ENCODE measurements at regions of chr3 and their contacts with region 1.

Region 1: DNA sequence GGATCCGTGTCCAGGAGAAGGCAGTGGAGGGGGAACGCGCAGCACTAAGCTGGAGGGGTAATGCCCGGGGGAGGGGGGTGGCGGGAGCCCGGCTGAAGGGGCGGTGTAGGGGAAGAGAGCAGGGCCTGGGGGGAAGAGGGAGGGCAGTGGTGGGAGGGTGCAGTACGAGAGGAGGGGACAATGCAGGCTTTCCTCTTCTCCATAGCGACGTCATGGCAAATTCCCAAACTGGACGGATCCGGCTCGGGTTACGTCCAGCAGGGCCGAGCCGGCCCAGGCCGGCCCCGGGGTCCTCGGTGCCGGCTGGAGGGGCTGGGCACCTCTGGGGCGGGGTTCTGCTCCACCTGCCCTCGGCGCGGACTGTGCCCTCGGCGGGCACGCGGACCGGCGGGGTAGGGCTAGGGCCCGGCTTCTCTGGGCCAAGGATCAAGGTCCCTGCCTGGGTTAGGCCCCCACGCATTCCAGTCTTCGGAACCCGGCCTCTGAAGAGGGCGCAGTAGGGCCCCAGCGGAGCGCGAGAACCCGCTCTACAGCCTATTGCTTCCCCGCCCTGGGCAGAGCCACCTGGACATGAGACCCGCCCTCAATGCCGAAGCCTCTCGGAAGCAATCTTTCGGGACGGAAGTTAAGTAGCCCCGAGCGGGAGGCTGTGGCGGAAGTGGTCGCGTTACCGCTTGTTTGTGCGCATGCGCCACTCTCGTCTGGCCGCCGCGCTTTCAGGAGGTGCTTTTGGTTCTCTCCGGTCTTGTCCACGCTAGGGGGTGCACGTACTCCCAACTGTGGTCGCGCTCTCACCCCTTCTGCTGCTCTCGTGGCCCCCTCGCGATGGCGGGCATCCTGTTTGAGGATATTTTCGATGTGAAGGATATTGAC is 1.4 kb downstream of the POLR2H start:
- H3K4me3 Mint-ChIP-seq: peak overlapping the region; percentile 86
- H3K27ac Mint-ChIP-seq: peak overlapping the region; percentile 90
- H3K4me1 Mint-ChIP-seq: peaks cover 42% of the 10 kb centered on the region
- H3K27me3 Mint-ChIP-seq: peaks cover 21% of the 10 kb centered on the region

Region 2: GRCh38 chr3:184399410-184399809 is 36.5 kb after region 1 on chr3:
- intact Hi-C with region 1: no loop called
- H3K4me3 Mint-ChIP-seq: no peak overlapping the region
- H3K27ac Mint-ChIP-seq: no peak overlapping the region
- H3K4me1 Mint-ChIP-seq: no peaks in the 10 kb centered on the region
- H3K27me3 Mint-ChIP-seq: peaks cover 60% of the 10 kb centered on the region

Region 3: DNA sequence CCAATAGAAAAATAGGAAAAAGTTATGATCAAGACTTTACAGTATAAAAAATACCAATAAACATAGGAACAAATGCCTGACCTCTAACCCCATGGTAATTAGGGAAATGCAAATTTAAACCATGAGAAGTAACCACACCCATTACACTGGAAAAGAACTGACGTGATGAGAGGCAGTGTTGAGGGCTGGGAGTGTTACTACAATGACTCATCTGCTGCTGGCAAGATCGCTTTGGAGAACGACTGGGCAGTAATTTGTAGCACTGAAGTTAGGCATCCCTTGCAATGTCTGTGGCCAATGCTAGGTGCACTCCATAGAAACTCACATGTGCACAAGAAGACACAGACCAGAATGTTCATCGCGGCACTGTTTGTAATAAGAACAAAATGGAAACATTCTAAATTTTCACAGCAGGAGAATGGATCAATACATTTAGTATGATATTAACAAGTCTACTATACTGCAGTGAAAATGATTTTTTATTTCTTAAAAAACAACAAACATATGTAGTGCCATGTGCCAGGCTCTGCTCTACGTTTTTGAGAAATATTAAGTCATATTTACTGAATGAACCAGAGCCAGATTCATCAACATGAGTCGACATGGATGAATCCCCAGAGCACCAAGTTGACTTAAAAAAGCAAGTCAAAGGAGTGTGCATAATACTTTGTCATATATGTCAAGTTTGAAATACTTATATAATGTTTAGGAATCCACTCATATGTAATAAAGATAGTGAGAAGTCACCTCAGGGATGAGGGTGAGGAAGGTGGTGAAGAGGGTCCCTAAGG is 161.1 kb after region 1 on chr3:
- intact Hi-C with region 1: loop called (anchors 2 kb)
- H3K4me3 Mint-ChIP-seq: no peak overlapping the region
- H3K27ac Mint-ChIP-seq: peak overlapping the region; percentile 99
- H3K4me1 Mint-ChIP-seq: peaks cover 34% of the 10 kb centered on the region
- H3K27me3 Mint-ChIP-seq: peaks cover 11% of the 10 kb centered on the region

Measured in dendritic cell treated with granulocyte-macrophage colony-stimulating factor and Interleukin-4, amounts not matched to agents 40 ng/mL and 50 ng/mL, for 4 days (primary cell).